Activated CD4-positive, alpha-beta memory T cell treated with anti-CD3 and anti-CD28 coated beads, Interleukin-2, amount 10 ng/mL, durations not matched to agents 7 days and 5 days (primary cell): ENCODE measurements at regions of chr9 and their contacts with region 1.

Region 1: DNA sequence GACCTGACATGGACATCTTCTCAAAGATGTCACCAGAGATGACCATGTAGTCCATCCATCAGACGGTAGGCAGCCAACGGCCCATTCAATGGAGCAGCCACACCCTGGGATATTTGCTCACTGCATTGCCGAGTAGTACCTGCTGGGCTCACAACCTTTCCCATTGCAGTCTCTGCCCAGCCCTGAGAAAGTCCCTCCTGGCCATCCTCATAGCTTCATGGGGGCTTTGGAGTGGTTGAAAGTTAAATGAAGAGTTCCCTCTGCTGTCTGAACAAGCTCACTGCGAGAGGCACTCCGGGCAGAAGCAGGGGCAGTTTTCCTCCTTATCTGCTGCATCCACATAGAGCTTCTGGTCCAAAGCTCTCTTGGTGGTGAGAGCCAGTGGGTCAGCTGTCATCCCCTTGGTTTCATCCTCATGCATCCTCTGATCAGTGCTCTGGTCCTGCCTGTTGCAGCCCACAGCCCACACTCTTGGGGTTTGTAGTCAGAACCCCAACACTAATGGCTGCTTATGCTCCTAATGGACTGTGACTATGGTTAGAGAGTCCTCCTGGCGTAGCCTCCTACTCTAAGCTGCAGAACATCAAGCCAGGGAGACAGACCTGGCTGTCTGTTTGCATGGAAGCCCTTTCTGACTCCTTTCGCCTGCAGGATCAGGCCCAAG is 23.4 kb downstream of the TNFSF8 start:
- DNase-seq: peak; percentile 38
- H3K4me3 Mint-ChIP-seq: peak overlapping the region; percentile 59
- H3K27ac Mint-ChIP-seq: peak overlapping the region; percentile 92
- H3K4me1 Mint-ChIP-seq: peaks cover 68% of the 10 kb centered on the region
- H3K27me3 Mint-ChIP-seq: no peaks in the 10 kb centered on the region

Region 2: GRCh38 chr9:114691046-114691955 is 215.7 kb before region 1 on chr9:
- CTCF ChIA-PET with region 1: interaction called, 21 read pairs
- POLR2A ChIA-PET with region 1: interaction called, 61 read pairs
- DNase-seq: peak; percentile 87
- H3K4me3 Mint-ChIP-seq: peak overlapping the region; percentile 26
- H3K27ac Mint-ChIP-seq: peak overlapping the region; percentile 93
- H3K4me1 Mint-ChIP-seq: peaks cover 95% of the 10 kb centered on the region
- H3K27me3 Mint-ChIP-seq: peaks cover 33% of the 10 kb centered on the region

Region 3: DNA sequence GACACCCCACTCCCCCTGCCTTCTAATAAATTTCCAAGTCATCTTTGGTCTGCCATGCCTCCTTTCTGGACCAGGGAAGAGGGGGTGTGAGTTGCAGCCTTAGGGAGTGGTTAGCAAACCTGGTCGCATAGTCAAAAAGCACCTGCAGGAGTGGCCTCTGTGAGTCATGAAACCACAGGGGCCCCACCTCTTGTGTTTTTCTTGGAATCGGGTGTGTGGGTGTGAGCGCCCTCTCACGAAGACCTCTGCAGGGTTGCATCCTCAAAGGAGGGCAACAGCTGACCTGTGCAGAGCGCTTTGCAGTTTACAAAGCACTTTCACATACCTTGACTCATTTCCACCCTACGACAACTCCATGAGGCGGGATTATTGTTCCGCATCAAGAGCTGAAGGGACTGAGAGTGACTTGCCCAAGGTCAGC is 188.2 kb before region 1 on chr9:
- CTCF ChIA-PET with region 1: interaction called, 10 read pairs
- POLR2A ChIA-PET with region 1: interaction called, 30 read pairs
- DNase-seq: peak; percentile 98
- H3K4me3 Mint-ChIP-seq: peak overlapping the region; percentile 3
- H3K27ac Mint-ChIP-seq: peak overlapping the region; percentile 93
- H3K4me1 Mint-ChIP-seq: peaks cover 68% of the 10 kb centered on the region
- H3K27me3 Mint-ChIP-seq: peaks cover 20% of the 10 kb centered on the region

Region 4: DNA sequence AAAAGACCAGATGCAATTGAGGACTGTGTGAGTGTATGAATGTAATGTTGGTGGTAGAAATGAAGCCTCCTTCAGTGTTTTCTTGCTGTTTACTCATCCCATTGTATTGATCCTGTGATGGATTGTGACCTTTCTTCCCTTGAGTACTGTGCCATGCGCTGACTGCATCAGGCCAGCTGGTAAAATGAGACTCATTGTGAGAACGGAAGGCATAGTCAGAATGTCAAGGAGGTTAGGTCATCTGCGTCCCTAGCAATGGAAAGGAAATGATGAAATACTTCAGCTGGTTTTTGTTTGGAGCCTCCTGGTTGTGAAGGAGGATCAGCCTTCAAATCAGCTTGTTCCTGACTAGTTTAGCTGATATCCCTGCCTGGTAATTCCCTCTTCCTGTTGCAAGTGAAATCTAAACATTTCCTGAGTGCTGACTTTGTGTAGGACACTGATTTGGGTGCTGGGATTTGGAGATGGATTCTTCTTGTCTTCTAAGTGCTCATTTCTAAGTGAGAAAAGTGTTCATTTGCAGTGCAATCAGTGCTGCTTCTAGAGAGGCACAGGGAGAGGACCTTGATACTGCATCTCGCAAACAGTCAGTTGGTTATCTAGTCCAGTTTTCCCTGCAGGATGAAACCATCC is 12.1 kb before region 1 on chr9:
- CTCF ChIA-PET with region 1: interaction called, 73 read pairs
- POLR2A ChIA-PET with region 1: interaction called, 73 read pairs
- DNase-seq: peak; percentile 66
- H3K4me3 Mint-ChIP-seq: no peak overlapping the region
- H3K27ac Mint-ChIP-seq: peak overlapping the region; percentile 74
- H3K4me1 Mint-ChIP-seq: peaks cover 43% of the 10 kb centered on the region
- H3K27me3 Mint-ChIP-seq: no peaks in the 10 kb centered on the region

Region 5: GRCh38 chr9:115013998-115014397 is 107.0 kb after region 1 on chr9:
- CTCF ChIA-PET with region 1: interaction called, 50 read pairs
- POLR2A ChIA-PET with region 1: interaction called, 3 read pairs
- DNase-seq: peak; percentile 83
- H3K4me3 Mint-ChIP-seq: no peak overlapping the region
- H3K27ac Mint-ChIP-seq: peak overlapping the region; percentile 24
- H3K4me1 Mint-ChIP-seq: peaks cover 30% of the 10 kb centered on the region
- H3K27me3 Mint-ChIP-seq: peaks cover 17% of the 10 kb centered on the region